ENCODE measurements at regions of chr18 and their contacts with region 1.

Region 1: DNA sequence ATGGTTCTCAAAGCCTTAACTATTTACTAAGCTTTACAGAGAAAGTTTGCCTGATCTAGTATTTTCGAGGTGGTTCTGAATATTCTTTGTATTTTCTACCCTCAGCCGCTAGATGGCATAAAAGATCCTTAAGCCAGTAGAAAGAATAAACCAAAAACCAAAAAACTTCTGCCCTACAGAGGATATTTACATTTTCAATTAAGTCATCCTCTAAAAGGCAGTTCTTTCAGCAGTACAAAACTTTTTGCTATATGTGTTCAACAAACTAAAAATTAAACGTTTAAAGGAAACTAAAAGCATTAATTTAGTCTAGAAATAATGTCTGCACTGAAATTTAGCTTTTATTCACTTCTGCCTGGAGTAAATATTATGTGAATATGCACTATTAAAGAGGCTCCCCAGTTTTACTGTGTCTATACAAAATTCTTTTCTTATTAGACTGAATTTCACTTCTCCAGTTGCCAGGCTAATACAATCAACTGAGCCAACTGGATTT is 297.5 kb downstream of the PIEZO2 start:
- DNase-seq: no peak
- H3K4me3 ChIP-seq: no peak overlapping the region
- H3K27me3 ChIP-seq: peaks cover 10% of the 10 kb centered on the region; the same call in 1 of the 2 replicates
- CTCF ChIP-seq: peak; percentile 68

Region 2: DNA sequence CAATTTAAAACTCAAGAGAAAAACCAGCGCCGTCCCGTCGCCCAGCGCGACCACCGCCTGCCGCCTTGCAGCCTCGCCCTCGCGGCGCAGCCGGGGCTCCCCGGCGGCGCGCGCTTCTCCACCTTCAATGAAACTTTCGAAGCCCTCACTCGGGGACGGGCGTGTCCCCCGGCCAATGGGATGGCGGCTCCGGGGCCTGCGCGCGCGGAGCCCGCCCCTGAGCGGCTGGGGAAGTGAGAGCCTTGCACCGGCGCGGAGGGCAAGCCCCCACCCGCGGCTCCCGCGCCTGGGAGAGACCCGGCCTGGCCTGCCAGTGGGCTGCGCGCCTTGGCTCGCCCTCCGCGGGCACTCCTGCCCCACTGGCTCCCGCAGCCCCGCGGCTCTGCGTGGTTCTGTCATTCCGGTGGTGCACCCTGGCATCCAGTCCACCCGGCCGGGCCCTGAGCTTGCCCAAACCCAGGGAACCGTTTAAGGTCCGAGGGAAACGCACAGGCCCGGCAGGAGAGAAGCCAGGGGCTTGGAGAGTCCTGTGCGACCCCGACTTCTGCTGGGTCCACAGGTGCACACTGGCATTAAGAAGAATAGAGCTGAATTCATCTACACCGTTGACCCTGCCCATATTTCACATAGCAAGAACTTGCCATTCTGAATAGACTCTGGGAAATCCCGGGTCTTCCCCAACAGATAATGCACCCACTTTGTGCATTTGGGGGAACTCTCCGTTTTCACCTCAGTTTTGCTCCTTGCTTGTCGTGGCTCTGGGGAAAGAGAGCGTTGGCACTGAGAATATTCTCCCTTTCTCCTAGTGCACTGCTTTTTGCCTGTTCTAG is 297.8 kb after region 1 on chr18 and contains the start of gene PIEZO2:
- CTCF ChIA-PET with region 1: interaction called, 23 read pairs
- POLR2A ChIA-PET with region 1: no interaction called
- DNase-seq: no peak
- H3K4me3 ChIP-seq: peak within 1 kb of the TSS; percentile 41
- H3K27me3 ChIP-seq: peaks cover 33% of the 10 kb centered on the region
- CTCF ChIP-seq: no peak
- polyA plus RNA-seq, gene PIEZO2: 4.3 and 4.6 TPM in 2 replicates

Region 3: DNA sequence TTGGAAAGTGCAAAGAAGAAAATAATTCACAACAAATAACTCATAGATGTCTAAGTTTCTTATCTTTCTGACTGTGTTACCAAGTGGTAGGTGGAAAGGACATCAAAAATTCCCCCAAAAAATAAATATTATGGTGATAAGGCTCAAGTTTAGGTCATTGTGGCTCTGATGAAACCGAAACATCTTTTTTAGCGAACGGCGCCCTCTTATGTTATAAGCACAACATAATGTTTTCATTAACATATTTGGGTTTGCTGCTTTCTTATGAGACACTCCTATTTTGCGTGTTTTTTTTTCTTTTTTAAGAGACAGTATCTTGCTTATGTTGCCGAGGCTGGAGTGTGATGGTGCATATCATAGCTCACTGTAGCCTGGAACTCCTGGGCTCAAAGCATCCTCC is 718.9 kb after region 1 on chr18:
- CTCF ChIA-PET with region 1: interaction called, 11 read pairs
- POLR2A ChIA-PET with region 1: no interaction called
- DNase-seq: no peak
- H3K4me3 ChIP-seq: no peak overlapping the region
- H3K27me3 ChIP-seq: no peaks in the 10 kb centered on the region
- CTCF ChIP-seq: peak; percentile 17; the same call in 1 of the 2 replicates

Measured in BJ (cell line).